ENCODE measurements at regions of chr9 and their contacts with region 1.

Region 1: DNA sequence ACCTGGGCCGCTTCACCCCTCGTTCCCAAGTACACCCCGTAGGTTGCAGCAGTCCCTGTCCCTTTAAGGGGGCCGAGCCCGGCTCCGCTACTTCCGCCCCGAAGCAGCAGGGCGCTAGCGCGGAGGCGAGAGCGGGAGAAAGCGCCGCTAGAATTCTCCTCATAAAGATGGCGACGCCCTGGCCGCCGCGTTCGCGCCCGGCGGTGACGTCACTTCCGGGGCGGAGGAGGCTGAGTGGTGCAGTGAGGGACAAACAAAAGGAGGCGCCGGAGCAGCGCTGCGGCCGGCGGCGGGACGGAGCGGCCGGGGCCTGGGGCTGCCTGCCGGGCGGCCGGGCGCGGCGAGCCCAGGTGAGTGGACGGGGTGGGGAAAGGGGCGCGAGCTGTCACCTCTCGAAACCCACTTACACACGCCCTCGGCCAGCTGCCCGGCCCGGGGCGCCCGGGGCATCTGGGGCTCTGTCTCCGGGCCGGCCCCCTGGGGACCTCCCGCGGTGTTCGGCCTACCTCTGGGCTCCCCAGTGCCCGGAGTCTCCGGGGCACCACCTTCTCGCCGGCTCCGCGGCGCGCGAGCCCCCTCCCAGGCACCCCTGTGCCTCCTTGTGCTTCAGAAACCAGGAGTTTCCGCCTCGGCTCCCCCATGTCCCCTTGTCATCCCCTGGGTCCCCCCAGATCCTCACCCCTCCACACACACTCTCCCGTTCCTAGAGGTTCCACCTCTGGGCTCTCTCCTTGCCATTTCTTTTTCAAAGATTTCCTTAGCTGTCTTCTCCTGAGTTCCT is at the starts of genes KYAT1 and LRRC8A:
- DNase-seq: peak; percentile 87 to 98
- H3K4me3 ChIP-seq: peak within 1 kb of the TSS; percentile 82 to 99 (median 96)
- H3K27ac ChIP-seq: peak within 1 kb of the TSS; percentile 84
- H3K4me1 ChIP-seq: peaks cover 3 to 19% (median 7%) of the 10 kb centered on the region in 4 experiments; a peak in 6 of 7 replicates
- H3K27me3 ChIP-seq: no peaks in the 10 kb centered on the region
- CTCF ChIP-seq: no peak
- EP300 ChIP-seq: peak in 1 of 2 experiments; percentile 54; a peak in 1 of 3 replicates
- POLR2A ChIP-seq: peak; percentile 79 to 91
- RAD21 ChIP-seq: peak in 1 of 2 experiments; percentile 0; a peak in 1 of 4 replicates
- total RNA-seq, gene KYAT1: 28.5 and 30.4 TPM in 2 replicates
- total RNA-seq, gene LRRC8A: 103 and 106 TPM in 2 replicates

Region 2: GRCh38 chr9:128845155-128845931 is 36.7 kb before region 1 on chr9:
- CTCF ChIA-PET with region 1: interaction called, 13 read pairs
- POLR2A ChIA-PET with region 1: interaction called, 7 read pairs
- DNase-seq: no peak
- H3K4me3 ChIP-seq: no peak overlapping the region
- H3K27ac ChIP-seq: no peak overlapping the region
- H3K4me1 ChIP-seq: no peaks in the 10 kb centered on the region
- H3K27me3 ChIP-seq: no peaks in the 10 kb centered on the region
- CTCF ChIP-seq: peak; percentile 32 to 44 (median 42); a peak in 3 of 4 replicates
- EP300 ChIP-seq: no peak
- POLR2A ChIP-seq: no peak
- RAD21 ChIP-seq: peak; percentile 10 to 18; a peak in 1 of 4 replicates

Region 3: GRCh38 chr9:128863647-128864046 is 18.4 kb before region 1 on chr9:
- CTCF ChIA-PET with region 1: interaction called, 133 read pairs
- POLR2A ChIA-PET with region 1: interaction called, 6 read pairs
- DNase-seq: peak; percentile 87 to 99
- H3K4me3 ChIP-seq: no peak overlapping the region
- H3K27ac ChIP-seq: no peak overlapping the region; the same call in 1 of the 2 replicates
- H3K4me1 ChIP-seq: peaks cover 0 to 5% (median 2%) of the 10 kb centered on the region in 4 experiments; a peak in 4 of 7 replicates
- H3K27me3 ChIP-seq: no peaks in the 10 kb centered on the region
- CTCF ChIP-seq: peak; percentile 94 to 99 (median 99)
- EP300 ChIP-seq: no peak
- POLR2A ChIP-seq: no peak
- RAD21 ChIP-seq: peak; percentile 76 to 86

Region 4: GRCh38 chr9:128921881-128922763 is 40.0 kb after region 1 on chr9:
- CTCF ChIA-PET with region 1: interaction called, 99 read pairs
- POLR2A ChIA-PET with region 1: interaction called, 18 read pairs
- DNase-seq: peak; percentile 50 to 82
- H3K4me3 ChIP-seq: peak overlapping the region; percentile 39 to 73 (median 66)
- H3K27ac ChIP-seq: peak overlapping the region; percentile 68
- H3K4me1 ChIP-seq: peaks cover 0 to 10% (median 4%) of the 10 kb centered on the region in 4 experiments; a peak in 5 of 7 replicates
- H3K27me3 ChIP-seq: no peaks in the 10 kb centered on the region
- CTCF ChIP-seq: no peak
- EP300 ChIP-seq: no peak
- POLR2A ChIP-seq: peak in 1 of 2 experiments; percentile 58; a peak in 1 of 3 replicates
- RAD21 ChIP-seq: no peak; a peak in 1 of 4 replicates

Region 5: GRCh38 chr9:129125476-129125875 is 243.4 kb after region 1 on chr9:
- CTCF ChIA-PET with region 1: no interaction called
- POLR2A ChIA-PET with region 1: no interaction called
- DNase-seq: no peak
- H3K4me3 ChIP-seq: no peak overlapping the region
- H3K27ac ChIP-seq: no peak overlapping the region
- H3K4me1 ChIP-seq: peaks cover 9 to 18% (median 12%) of the 10 kb centered on the region in 4 experiments
- H3K27me3 ChIP-seq: no peaks in the 10 kb centered on the region
- CTCF ChIP-seq: no peak
- EP300 ChIP-seq: no peak
- POLR2A ChIP-seq: no peak
- RAD21 ChIP-seq: no peak

Measured in H1 (cell line).